ENCODE measurements at regions of chr18 and their contacts with region 1.

Region 1: GRCh38 chr18:57434536-57435494 is at the start of gene ONECUT2:
- DNase-seq: peak; percentile 88 to 92
- H3K4me3 ChIP-seq: peak within 1 kb of the TSS; percentile 60
- H3K4me3 Mint-ChIP-seq: peak within 1 kb of the TSS; percentile 76
- H3K27ac Mint-ChIP-seq: no peak within 1 kb of the TSS
- H3K4me1 ChIP-seq: no peaks in the 10 kb centered on the region
- H3K4me1 Mint-ChIP-seq: no peaks in the 10 kb centered on the region
- H3K27me3 ChIP-seq: no peaks in the 10 kb centered on the region
- H3K27me3 Mint-ChIP-seq: peaks cover 11% of the 10 kb centered on the region
- CTCF ChIP-seq: no peak
- total RNA-seq, gene ONECUT2: 0.28 and 0.86 TPM in 2 replicates

Region 2: GRCh38 chr18:56748698-56749268 is 686.0 kb before region 1 on chr18:
- CTCF ChIA-PET with region 1: no interaction called
- POLR2A ChIA-PET with region 1: no interaction called
- intact Hi-C with region 1: loop called (anchors 5 kb)
- DNase-seq: peak in 1 of 2 experiments; percentile 6
- H3K4me3 ChIP-seq: no peak overlapping the region
- H3K4me3 Mint-ChIP-seq: no peak overlapping the region
- H3K27ac Mint-ChIP-seq: no peak overlapping the region
- H3K4me1 ChIP-seq: no peaks in the 10 kb centered on the region
- H3K4me1 Mint-ChIP-seq: no peaks in the 10 kb centered on the region
- H3K27me3 ChIP-seq: no peaks in the 10 kb centered on the region
- H3K27me3 Mint-ChIP-seq: no peaks in the 10 kb centered on the region
- CTCF ChIP-seq: no peak

Region 3: DNA sequence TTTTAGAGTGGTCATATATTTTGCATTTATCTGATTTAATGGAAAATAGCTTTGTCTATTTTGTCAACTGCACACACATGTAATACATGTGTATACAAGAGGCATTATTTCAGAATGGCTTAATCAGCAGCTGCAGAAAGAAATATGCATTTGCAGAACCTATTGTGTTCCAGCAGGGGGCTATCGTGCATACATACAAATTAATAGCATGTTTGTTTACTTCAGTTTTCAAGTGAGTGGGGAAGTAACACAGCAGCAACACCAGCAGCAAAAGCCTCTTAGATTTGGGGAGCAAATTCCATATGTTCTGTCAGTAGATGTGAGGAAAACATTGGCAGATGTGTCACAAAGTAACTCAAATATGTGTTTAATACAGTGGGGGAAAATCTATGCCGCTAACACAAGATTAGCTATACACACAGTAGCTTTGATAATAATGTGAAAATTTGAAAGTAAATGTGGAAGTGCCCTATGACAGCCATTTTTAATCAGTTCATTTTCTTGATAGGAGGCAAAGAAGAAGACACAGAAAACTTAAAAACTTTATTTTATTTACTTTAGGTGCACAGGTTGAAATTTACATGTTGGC is 565.5 kb before region 1 on chr18:
- CTCF ChIA-PET with region 1: interaction called, 7 read pairs
- POLR2A ChIA-PET with region 1: no interaction called
- intact Hi-C with region 1: loop called (anchors 1 kb)
- DNase-seq: peak in 1 of 2 experiments; percentile 10
- H3K4me3 ChIP-seq: no peak overlapping the region
- H3K4me3 Mint-ChIP-seq: no peak overlapping the region
- H3K27ac Mint-ChIP-seq: no peak overlapping the region
- H3K4me1 ChIP-seq: no peaks in the 10 kb centered on the region
- H3K4me1 Mint-ChIP-seq: no peaks in the 10 kb centered on the region
- H3K27me3 ChIP-seq: no peaks in the 10 kb centered on the region
- H3K27me3 Mint-ChIP-seq: no peaks in the 10 kb centered on the region
- CTCF ChIP-seq: peak; percentile 48 to 51

Region 4: DNA sequence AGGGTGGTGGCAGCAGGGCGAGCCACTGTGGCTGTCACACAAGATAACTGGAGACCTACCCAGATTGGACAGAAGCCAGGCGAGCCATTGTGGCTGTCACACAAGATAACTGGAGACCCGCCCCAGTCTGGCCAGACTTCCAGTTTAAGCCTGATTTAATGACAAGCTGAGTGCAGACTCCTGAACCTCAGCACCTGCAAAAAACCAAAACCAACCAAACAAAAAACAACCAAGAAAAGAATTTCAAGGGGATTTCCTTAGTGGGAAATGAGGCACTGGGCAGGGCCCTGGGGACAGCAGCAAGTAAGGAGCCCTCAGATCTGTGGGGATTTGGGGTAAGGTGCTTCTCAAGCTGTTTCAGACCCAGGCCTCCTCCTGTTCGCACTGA is 383.2 kb before region 1 on chr18:
- CTCF ChIA-PET with region 1: no interaction called
- POLR2A ChIA-PET with region 1: no interaction called
- intact Hi-C with region 1: loop called (anchors 5 kb)
- DNase-seq: no peak
- H3K4me3 ChIP-seq: no peak overlapping the region
- H3K4me3 Mint-ChIP-seq: no peak overlapping the region
- H3K27ac Mint-ChIP-seq: no peak overlapping the region
- H3K4me1 ChIP-seq: no peaks in the 10 kb centered on the region
- H3K4me1 Mint-ChIP-seq: no peaks in the 10 kb centered on the region
- H3K27me3 ChIP-seq: no peaks in the 10 kb centered on the region
- H3K27me3 Mint-ChIP-seq: no peaks in the 10 kb centered on the region
- CTCF ChIP-seq: no peak

Region 5: DNA sequence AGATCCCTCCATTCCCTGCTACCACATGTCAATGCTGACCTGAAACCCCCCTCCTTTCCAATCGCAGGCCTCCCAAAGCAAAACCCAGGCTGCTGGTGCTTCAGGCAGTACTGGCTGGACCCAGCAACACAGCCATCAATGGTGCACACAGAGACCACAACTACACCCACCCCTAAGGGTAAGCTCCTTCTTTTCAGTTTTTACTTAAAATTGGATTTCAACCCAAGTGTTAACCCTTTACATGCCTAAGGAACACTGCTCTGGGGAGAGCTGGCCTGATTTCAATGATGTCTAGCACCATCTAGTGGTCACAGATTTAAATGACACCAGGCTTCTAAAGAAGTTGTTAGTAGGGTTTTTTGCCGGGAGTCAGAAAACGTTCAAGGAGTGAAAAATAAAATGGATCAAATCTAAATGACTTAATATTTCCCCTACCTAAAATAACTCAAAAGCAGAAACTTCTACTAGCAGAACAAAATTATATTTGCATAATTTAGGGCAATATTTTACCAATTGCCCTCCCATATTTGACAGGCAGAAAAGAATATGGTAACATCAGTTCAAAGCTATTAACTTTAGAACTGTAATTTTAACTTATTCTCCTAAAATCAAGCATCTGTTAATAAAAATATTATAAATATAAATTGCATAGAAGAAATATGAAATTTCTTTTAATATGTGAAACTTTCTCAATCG is 127.1 kb after region 1 on chr18:
- CTCF ChIA-PET with region 1: interaction called, 3 read pairs
- POLR2A ChIA-PET with region 1: no interaction called
- intact Hi-C with region 1: loop called (anchors 5 kb)
- DNase-seq: peak in 1 of 2 experiments; percentile 29
- H3K4me3 ChIP-seq: no peak overlapping the region
- H3K4me3 Mint-ChIP-seq: no peak overlapping the region
- H3K27ac Mint-ChIP-seq: no peak overlapping the region
- H3K4me1 ChIP-seq: no peaks in the 10 kb centered on the region
- H3K4me1 Mint-ChIP-seq: no peaks in the 10 kb centered on the region
- H3K27me3 ChIP-seq: no peaks in the 10 kb centered on the region
- H3K27me3 Mint-ChIP-seq: no peaks in the 10 kb centered on the region
- CTCF ChIP-seq: peak; percentile 38 to 53

Measured in Caco-2 (cell line).